B cell (primary cell): ENCODE measurements at regions of chr1 and their contacts with region 1.

Region 1: GRCh38 chr1:30801771-30802198 is 44.2 kb upstream of the LAPTM5 start:
- DNase-seq: peak; percentile 82
- ATAC-seq: peak; percentile 68
- H3K4me3 ChIP-seq: no peak overlapping the region
- H3K4me3 Mint-ChIP-seq: no peak overlapping the region
- H3K27ac ChIP-seq: no peak overlapping the region
- H3K27ac Mint-ChIP-seq: no peak overlapping the region
- H3K4me1 ChIP-seq: peaks cover 10 to 13% of the 10 kb centered on the region in 2 donors
- H3K4me1 Mint-ChIP-seq: peaks cover 14% of the 10 kb centered on the region
- H3K27me3 ChIP-seq: peaks cover 0 to 42% (median 10%) of the 10 kb centered on the region in 4 experiments
- H3K27me3 Mint-ChIP-seq: peaks cover 26% of the 10 kb centered on the region
- CTCF ChIP-seq: peak; percentile 97

Region 2: DNA sequence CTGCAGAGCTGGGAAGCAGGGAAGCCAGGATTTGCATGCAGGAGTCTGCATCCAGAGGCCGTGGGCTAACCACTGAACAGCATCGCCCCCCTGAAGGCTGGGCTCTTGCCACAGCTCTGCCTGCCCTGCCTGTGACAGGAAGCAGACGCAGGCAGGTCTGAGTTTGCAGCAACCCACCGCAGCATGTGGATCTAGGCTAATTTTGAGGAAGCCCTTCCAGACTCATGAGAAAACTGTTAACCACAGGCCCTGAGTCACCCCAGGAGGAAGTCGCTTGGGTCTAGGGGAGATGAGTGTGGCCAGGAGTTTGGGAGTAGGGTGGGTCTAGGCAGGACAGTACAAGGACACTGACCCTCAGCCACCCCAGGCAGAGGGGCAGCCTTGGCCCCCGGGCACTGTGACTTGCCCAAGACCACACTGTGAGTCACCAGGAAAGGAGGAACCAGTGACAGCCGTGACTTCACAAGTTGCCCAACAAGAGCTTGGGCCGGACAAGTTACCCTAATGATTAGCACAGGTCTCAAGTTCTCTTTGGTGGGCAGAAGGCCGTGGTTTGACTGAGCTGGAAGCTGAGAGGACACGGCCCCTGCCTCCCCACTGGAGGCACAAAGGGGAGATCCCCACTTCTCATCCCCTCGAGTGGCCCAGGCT is 45.1 kb before region 1 on chr1:
- CTCF ChIA-PET with region 1: interaction called, 13 read pairs
- POLR2A ChIA-PET with region 1: no interaction called
- intact Hi-C with region 1: no loop called
- DNase-seq: peak; percentile 87
- ATAC-seq: peak; percentile 19
- H3K4me3 ChIP-seq: peak overlapping the region; percentile 80 to 97 (median 95)
- H3K4me3 Mint-ChIP-seq: peak overlapping the region; percentile 92
- H3K27ac ChIP-seq: peak overlapping the region; percentile 98 to 100
- H3K27ac Mint-ChIP-seq: peak overlapping the region; percentile 92
- H3K4me1 ChIP-seq: peaks cover 62 to 87% of the 10 kb centered on the region in 2 donors
- H3K4me1 Mint-ChIP-seq: peaks cover 78% of the 10 kb centered on the region
- H3K27me3 ChIP-seq: no peaks in the 10 kb centered on the region
- H3K27me3 Mint-ChIP-seq: no peaks in the 10 kb centered on the region
- CTCF ChIP-seq: no peak

Region 3: DNA sequence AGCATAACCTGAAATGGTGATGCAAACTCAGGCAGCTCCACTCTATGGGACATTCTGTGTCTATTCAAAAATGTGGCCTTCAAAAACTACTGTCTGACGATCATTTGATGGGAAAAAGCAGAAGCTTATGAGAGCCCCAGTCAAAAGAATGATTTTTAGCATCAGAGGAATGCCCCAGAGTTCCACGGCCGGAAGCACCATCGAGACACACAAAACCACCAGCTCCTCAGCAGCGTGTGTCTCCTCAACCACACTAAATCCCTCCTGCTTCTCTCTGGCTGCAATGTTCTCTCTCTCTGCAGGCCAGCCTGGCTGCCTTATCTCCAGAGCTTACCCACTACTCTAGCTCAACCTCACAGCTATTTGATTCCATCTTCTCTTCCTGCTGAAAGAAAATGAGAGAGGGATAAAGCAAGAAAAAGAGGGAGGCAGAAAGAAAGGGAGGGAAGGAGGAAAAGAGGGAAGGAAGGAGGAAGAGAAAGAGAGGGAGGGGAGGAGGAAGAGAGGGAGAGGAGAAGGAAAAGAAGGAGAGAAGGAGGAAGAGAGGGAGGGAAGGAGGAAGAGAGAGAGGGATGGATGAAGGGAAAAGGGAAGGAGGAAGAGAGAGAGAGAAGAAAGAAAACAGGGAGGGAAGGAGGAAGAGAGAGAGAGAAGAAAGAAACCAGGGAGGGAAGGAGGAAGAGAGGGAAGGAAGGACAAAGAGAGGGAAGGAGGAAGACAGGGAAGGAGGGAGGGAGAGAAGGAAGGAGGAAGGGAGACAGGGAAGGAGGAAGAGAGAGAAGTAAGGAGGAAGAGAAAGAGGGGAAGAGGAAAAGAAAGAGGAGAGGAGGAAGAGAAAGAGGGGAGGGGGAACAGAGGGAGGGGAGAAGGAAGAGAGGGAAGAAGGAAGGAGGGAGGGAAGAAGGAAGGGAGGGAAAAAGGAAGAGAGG is 10.7 kb before region 1 on chr1:
- CTCF ChIA-PET with region 1: interaction called, 74 read pairs
- POLR2A ChIA-PET with region 1: interaction called, 3 read pairs
- intact Hi-C with region 1: no loop called
- DNase-seq: peak; percentile 82
- ATAC-seq: peak; percentile 80
- H3K4me3 ChIP-seq: no peak overlapping the region
- H3K4me3 Mint-ChIP-seq: peak overlapping the region; percentile 76
- H3K27ac ChIP-seq: peak overlapping the region; percentile 18 to 55
- H3K27ac Mint-ChIP-seq: peak overlapping the region; percentile 74
- H3K4me1 ChIP-seq: peaks cover 14 to 18% of the 10 kb centered on the region in 2 donors
- H3K4me1 Mint-ChIP-seq: peaks cover 22% of the 10 kb centered on the region
- H3K27me3 ChIP-seq: peaks cover 0 to 10% (median 0%) of the 10 kb centered on the region in 4 experiments
- H3K27me3 Mint-ChIP-seq: peaks cover 23% of the 10 kb centered on the region
- CTCF ChIP-seq: no peak

Region 4: GRCh38 chr1:30856260-30856790 is 54.5 kb after region 1 on chr1:
- CTCF ChIA-PET with region 1: interaction called, 12 read pairs
- POLR2A ChIA-PET with region 1: no interaction called
- intact Hi-C with region 1: loop called (anchors 2 kb)
- DNase-seq: no peak
- ATAC-seq: no peak
- H3K4me3 ChIP-seq: no peak overlapping the region
- H3K4me3 Mint-ChIP-seq: no peak overlapping the region
- H3K27ac ChIP-seq: no peak overlapping the region
- H3K27ac Mint-ChIP-seq: no peak overlapping the region
- H3K4me1 ChIP-seq: peaks cover 0 to 3% of the 10 kb centered on the region in 2 donors
- H3K4me1 Mint-ChIP-seq: peaks cover 3% of the 10 kb centered on the region
- H3K27me3 ChIP-seq: peaks cover 0 to 7% (median 2%) of the 10 kb centered on the region in 4 experiments
- H3K27me3 Mint-ChIP-seq: peaks cover 50% of the 10 kb centered on the region
- CTCF ChIP-seq: no peak

Region 5: DNA sequence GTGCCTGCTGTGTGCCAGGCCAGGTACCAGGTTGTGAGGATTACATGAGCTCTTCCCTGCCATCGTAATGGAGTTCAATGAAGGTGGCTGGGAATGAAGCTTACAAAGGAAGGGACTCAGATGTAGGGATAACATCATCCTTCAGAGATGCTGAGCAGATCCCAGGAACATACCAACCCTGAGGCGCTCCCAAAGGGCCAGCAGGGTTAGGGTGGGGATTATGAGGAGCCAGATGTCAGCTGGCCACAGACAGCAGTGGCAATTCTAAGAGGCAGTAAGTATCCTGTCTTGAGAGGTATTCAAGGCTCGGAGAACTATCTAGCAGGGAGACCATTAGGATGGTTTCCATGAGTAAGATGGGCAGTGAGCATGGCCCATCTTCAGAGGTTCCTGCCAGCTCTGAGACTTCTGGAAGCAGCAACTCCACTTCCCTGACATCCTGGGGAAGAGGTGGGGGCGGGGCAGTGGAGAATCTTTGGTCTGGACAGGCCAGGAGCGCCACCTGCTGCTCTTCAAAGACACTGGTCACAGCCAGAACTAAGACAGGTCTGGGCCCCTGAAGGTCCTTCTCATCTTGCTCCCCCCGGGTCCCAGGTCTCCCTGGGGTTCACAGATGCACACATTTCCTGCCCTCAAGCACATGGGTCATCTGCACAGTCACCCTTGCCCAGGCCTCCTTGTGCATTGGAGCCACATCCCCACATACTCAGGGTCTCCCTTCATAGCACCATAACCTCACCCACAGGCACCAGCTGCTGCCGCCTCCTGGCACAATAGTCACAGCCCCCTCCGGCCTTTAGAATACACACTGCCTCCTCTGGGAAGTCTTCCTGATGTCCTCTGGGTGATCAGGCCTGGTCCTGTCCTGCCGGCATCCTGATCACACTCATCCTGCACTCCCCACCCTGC is 109.5 kb after region 1 on chr1:
- CTCF ChIA-PET with region 1: interaction called, 337 read pairs
- POLR2A ChIA-PET with region 1: interaction called, 5 read pairs
- intact Hi-C with region 1: loop called (anchors 1 kb)
- DNase-seq: peak; percentile 74
- ATAC-seq: peak; percentile 57
- H3K4me3 ChIP-seq: no peak overlapping the region
- H3K4me3 Mint-ChIP-seq: no peak overlapping the region
- H3K27ac ChIP-seq: no peak overlapping the region
- H3K27ac Mint-ChIP-seq: no peak overlapping the region
- H3K4me1 ChIP-seq: peaks cover 30 to 31% of the 10 kb centered on the region in 2 donors
- H3K4me1 Mint-ChIP-seq: peaks cover 29% of the 10 kb centered on the region
- H3K27me3 ChIP-seq: peaks cover 0 to 40% (median 18%) of the 10 kb centered on the region in 4 experiments
- H3K27me3 Mint-ChIP-seq: peaks cover 32% of the 10 kb centered on the region
- CTCF ChIP-seq: peak; percentile 72

Region 6: DNA sequence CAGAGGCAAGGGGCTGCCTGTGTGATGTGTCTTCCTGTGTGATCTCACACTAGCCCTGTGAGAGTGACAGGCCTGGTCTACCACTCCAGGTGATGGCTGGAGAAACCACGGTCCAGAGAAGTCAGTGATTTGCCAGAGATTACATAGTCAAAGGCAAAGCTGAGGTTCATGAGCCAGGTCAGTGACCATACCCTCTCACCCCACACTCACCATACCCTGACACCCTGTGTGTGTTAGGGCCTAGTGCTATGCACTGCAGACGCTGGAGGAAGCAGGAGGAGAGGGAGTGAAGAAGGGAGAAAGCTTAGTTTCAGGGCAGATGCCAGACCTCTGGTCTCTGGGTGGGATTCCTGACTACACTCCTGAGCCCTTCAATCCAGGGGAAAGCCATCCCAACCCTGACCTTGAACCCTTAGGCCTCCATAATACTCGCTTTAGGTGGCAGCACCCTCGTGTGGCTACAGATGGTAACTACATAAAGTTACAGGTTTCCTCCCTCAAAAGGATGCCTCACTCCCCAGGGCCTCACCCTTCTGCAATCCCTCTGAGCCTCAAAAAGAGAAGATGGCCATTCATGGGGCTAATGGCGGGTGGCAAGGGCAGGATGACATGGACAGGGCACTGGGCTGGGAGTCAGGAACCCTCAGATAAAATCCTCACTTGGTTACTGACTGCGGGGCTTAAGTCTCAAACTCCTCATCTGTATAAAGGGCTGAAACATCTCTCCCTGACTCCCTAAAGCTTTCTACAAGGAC is 127.5 kb after region 1 on chr1:
- CTCF ChIA-PET with region 1: interaction called, 129 read pairs
- POLR2A ChIA-PET with region 1: no interaction called
- intact Hi-C with region 1: loop called (anchors 1 kb)
- DNase-seq: peak; percentile 65
- ATAC-seq: peak; percentile 71
- H3K4me3 ChIP-seq: no peak overlapping the region
- H3K4me3 Mint-ChIP-seq: no peak overlapping the region
- H3K27ac ChIP-seq: no peak overlapping the region
- H3K27ac Mint-ChIP-seq: peak overlapping the region; percentile 26
- H3K4me1 ChIP-seq: peaks cover 0 to 11% of the 10 kb centered on the region in 2 donors
- H3K4me1 Mint-ChIP-seq: peaks cover 13% of the 10 kb centered on the region
- H3K27me3 ChIP-seq: no peaks in the 10 kb centered on the region
- H3K27me3 Mint-ChIP-seq: no peaks in the 10 kb centered on the region
- CTCF ChIP-seq: peak; percentile 86